ENCODE measurements at regions of chr5 and their contacts with region 1.

Region 1: DNA sequence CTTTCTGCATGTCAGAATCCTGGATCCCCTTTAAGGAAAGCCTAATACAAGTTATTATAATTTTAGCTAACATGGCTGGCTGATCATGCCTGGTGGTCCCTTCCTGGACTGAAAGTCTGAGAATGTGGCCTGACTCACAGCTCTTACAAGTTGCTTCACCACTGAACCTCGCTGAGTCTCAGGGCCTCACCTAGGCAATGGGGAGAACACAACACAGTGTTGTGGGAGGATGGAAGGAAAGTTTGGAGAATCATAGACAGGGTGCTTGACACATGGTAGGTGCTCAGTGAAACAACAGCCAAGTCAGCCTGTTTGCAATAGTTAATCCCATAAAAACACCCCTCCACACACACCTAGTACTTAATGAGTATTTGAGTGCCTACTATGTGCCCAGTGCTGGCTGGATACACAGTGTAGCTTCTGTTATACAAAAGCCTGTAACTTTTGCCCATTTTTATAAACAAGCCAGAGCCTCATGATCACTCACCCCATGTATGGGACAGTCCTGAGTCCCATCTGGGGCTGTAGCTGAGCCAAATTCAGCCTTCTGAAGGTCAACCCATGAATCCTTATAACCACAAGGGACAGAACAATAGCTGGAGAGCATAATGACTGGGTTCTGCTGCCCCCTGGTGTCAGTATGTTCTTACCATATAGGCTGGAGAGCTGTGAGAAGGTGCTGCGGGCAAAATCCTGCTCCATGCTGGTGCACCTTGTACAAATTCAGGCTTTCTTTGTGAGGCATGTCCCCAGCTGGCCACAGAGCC is 3.9 kb downstream of the ACSL6 start:
- DNase-seq: peak; percentile 87
- ATAC-seq: peak; percentile 71
- H3K4me3 Mint-ChIP-seq: no peak overlapping the region
- H3K27ac Mint-ChIP-seq: no peak overlapping the region
- H3K4me1 Mint-ChIP-seq: peaks cover 21% of the 10 kb centered on the region
- H3K27me3 Mint-ChIP-seq: peaks cover 31% of the 10 kb centered on the region

Region 2: DNA sequence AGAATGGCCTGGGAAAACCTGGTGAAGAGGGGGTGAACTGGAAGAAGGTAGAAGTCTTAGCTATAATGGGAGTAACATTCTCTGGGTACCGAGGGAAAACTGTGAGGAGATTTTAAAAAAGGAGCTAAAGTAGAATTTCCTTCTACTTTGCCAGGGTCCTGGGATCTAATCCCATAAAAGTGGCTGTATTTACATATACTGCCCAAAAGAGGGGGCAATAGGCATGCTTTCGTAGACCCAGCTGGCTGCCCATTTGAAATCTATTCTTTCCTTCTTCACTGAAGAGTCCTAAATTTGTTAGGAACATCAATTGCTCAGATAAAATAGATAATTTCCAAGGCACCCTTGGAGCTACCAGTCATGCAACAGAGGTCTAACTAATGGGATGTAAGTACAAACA is 584.5 kb before region 1 on chr5:
- CTCF ChIA-PET with region 1: interaction called, 28 read pairs
- DNase-seq: no peak
- ATAC-seq: peak; percentile 30
- H3K4me3 Mint-ChIP-seq: no peak overlapping the region
- H3K27ac Mint-ChIP-seq: no peak overlapping the region
- H3K4me1 Mint-ChIP-seq: peaks cover 17% of the 10 kb centered on the region
- H3K27me3 Mint-ChIP-seq: no peaks in the 10 kb centered on the region

Region 3: GRCh38 chr5:131589510-131590348 is 417.9 kb before region 1 on chr5:
- CTCF ChIA-PET with region 1: interaction called, 140 read pairs
- DNase-seq: peak; percentile 51
- ATAC-seq: peak; percentile 74
- H3K4me3 Mint-ChIP-seq: no peak overlapping the region
- H3K27ac Mint-ChIP-seq: no peak overlapping the region
- H3K4me1 Mint-ChIP-seq: peaks cover 37% of the 10 kb centered on the region
- H3K27me3 Mint-ChIP-seq: no peaks in the 10 kb centered on the region

Region 4: DNA sequence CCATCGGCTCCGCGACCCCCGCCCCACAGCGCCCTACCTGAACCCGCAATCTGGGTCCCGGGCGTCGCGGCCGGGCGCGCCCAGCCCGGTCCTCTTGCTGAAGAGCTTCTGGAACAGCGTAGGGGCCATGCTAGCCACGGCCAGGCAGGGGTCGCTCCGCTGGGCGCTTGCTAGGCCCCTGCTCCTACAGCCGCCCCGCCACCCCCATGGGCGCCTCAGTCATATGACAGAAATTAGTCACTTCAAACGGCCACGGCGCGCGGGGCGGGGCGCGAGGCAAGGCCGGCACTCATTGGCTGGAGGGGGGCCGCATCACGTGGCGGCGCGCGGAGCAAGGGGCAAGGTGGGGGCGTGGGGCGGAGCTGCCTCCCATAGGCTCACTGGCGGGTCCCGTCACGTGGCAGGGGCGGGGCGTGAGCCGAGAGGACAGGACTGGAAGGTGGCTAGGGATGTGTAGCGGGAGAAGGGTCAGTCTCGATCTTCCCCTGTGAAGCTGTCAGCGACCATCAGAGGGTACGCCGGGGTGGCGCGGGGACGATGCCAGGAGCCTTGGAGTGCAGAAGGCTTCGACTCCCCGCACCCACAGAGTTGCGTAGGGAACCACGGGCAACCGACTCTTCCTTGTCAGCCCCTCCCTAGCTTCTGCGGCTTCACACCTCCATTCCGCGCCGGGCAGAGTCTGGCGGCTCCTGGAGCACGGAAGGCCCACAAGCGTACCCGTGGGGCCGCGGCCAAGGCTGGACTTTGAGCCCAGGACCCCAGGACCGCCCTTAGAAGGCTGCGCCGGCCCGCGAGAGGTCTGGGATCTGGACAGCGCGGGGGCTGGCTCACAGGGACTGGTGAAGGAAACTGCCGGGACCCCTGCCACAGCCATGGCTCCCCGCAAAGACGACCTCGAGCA is 210.5 kb before region 1 on chr5 and contains the start of gene FNIP1:
- CTCF ChIA-PET with region 1: interaction called, 10 read pairs
- DNase-seq: peak; percentile 99
- ATAC-seq: peak; percentile 96
- H3K4me3 Mint-ChIP-seq: peak within 1 kb of the TSS; percentile 97
- H3K27ac Mint-ChIP-seq: peak within 1 kb of the TSS; percentile 91
- H3K4me1 Mint-ChIP-seq: peaks cover 33% of the 10 kb centered on the region
- H3K27me3 Mint-ChIP-seq: no peaks in the 10 kb centered on the region
- total RNA-seq, gene FNIP1: 25.5 to 30.3 TPM

Region 5: GRCh38 chr5:131810510-131811249 is 196.9 kb before region 1 on chr5:
- CTCF ChIA-PET with region 1: interaction called, 42 read pairs
- DNase-seq: no peak
- ATAC-seq: peak; percentile 33
- H3K4me3 Mint-ChIP-seq: no peak overlapping the region
- H3K27ac Mint-ChIP-seq: no peak overlapping the region
- H3K4me1 Mint-ChIP-seq: no peaks in the 10 kb centered on the region
- H3K27me3 Mint-ChIP-seq: peaks cover 3% of the 10 kb centered on the region

Region 6: GRCh38 chr5:131991593-131992324 is 15.8 kb before region 1 on chr5:
- CTCF ChIA-PET with region 1: interaction called, 18 read pairs
- DNase-seq: no peak
- ATAC-seq: no peak
- H3K4me3 Mint-ChIP-seq: no peak overlapping the region
- H3K27ac Mint-ChIP-seq: no peak overlapping the region
- H3K4me1 Mint-ChIP-seq: peaks cover 5% of the 10 kb centered on the region
- H3K27me3 Mint-ChIP-seq: peaks cover 3% of the 10 kb centered on the region

Region 7: GRCh38 chr5:132019857-132020555 is 12.4 kb after region 1 on chr5:
- CTCF ChIA-PET with region 1: interaction called, 29 read pairs
- DNase-seq: peak; percentile 95
- ATAC-seq: peak; percentile 94
- H3K4me3 Mint-ChIP-seq: peak overlapping the region; percentile 55
- H3K27ac Mint-ChIP-seq: peak overlapping the region; percentile 91
- H3K4me1 Mint-ChIP-seq: peaks cover 48% of the 10 kb centered on the region
- H3K27me3 Mint-ChIP-seq: peaks cover 54% of the 10 kb centered on the region

Region 8: DNA sequence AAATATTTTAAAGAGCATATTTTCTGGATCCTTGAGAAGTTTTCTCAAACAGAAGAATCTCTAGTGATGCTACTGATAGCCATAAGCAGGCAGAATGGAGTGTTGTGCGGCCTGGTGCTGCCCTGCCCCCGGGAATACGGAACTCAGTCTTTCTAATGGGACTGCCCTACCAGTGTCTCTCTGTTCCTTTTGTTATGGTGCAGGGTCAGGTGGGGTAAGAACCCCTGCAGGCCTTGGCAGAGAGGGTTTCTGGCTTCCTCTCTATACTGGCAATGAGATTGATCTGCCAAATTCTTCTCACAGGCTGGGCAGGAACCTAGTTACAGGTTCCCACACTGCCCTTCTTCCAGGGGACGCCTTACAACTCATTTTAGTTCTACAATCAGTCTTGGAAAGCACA is 533.2 kb after region 1 on chr5:
- CTCF ChIA-PET with region 1: no interaction called
- DNase-seq: no peak
- ATAC-seq: no peak
- H3K4me3 Mint-ChIP-seq: no peak overlapping the region
- H3K27ac Mint-ChIP-seq: no peak overlapping the region
- H3K4me1 Mint-ChIP-seq: peaks cover 26% of the 10 kb centered on the region
- H3K27me3 Mint-ChIP-seq: no peaks in the 10 kb centered on the region